Caco-2 (cell line): ENCODE measurements at regions of chr6 and their contacts with region 1.

Region 1: GRCh38 chr6:131519670-131520436 is 53.2 kb upstream of the ARG1 start:
- DNase-seq: peak; percentile 47 to 50
- H3K4me3 ChIP-seq: no peak overlapping the region
- H3K4me3 Mint-ChIP-seq: no peak overlapping the region
- H3K27ac Mint-ChIP-seq: no peak overlapping the region
- H3K4me1 ChIP-seq: no peaks in the 10 kb centered on the region
- H3K4me1 Mint-ChIP-seq: no peaks in the 10 kb centered on the region
- H3K27me3 ChIP-seq: no peaks in the 10 kb centered on the region
- H3K27me3 Mint-ChIP-seq: no peaks in the 10 kb centered on the region
- CTCF ChIP-seq: peak; percentile 52 to 54

Region 2: DNA sequence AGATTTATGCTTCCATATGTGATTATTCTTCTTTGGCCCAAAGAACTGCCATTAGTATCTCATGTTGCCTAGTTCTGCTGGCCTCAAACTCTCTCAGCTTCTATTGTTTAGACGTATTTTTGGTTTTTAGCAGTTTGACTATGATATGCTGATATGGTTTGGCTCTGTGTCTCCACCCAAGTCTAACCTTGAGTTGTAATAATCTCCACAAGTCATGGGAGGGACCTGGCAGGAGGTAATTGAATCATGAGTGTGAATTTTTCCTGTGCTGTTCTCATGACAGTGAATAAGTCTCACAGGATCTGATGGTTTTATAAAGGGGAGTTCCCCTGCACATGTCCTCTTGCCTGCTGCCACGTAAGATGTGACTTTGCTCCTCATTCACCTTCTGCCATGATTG is 43.5 kb before region 1 on chr6:
- CTCF ChIA-PET with region 1: no interaction called
- POLR2A ChIA-PET with region 1: no interaction called
- intact Hi-C with region 1: loop called (anchors 2 kb)
- DNase-seq: no peak
- H3K4me3 ChIP-seq: no peak overlapping the region
- H3K4me3 Mint-ChIP-seq: no peak overlapping the region
- H3K27ac Mint-ChIP-seq: no peak overlapping the region
- H3K4me1 ChIP-seq: peaks cover 27% of the 10 kb centered on the region
- H3K4me1 Mint-ChIP-seq: peaks cover 7% of the 10 kb centered on the region
- H3K27me3 ChIP-seq: no peaks in the 10 kb centered on the region
- H3K27me3 Mint-ChIP-seq: no peaks in the 10 kb centered on the region
- CTCF ChIP-seq: no peak